Activated CD4-positive, alpha-beta T cell treated with anti-CD3 and anti-CD28 coated beads, Interleukin-2, amount 10 ng/mL, durations not matched to agents 24 days and 14 days (primary cell): ENCODE measurements at regions of chr12 and their contacts with region 1.

Region 1: GRCh38 chr12:108568338-108569154 is 6.2 kb downstream of the ISCU start:
- DNase-seq: peak; percentile 93
- H3K4me3 Mint-ChIP-seq: peak overlapping the region; percentile 78
- H3K27ac Mint-ChIP-seq: peak overlapping the region; percentile 91
- H3K4me1 Mint-ChIP-seq: peaks cover 47% of the 10 kb centered on the region
- H3K27me3 Mint-ChIP-seq: no peaks in the 10 kb centered on the region

Region 2: DNA sequence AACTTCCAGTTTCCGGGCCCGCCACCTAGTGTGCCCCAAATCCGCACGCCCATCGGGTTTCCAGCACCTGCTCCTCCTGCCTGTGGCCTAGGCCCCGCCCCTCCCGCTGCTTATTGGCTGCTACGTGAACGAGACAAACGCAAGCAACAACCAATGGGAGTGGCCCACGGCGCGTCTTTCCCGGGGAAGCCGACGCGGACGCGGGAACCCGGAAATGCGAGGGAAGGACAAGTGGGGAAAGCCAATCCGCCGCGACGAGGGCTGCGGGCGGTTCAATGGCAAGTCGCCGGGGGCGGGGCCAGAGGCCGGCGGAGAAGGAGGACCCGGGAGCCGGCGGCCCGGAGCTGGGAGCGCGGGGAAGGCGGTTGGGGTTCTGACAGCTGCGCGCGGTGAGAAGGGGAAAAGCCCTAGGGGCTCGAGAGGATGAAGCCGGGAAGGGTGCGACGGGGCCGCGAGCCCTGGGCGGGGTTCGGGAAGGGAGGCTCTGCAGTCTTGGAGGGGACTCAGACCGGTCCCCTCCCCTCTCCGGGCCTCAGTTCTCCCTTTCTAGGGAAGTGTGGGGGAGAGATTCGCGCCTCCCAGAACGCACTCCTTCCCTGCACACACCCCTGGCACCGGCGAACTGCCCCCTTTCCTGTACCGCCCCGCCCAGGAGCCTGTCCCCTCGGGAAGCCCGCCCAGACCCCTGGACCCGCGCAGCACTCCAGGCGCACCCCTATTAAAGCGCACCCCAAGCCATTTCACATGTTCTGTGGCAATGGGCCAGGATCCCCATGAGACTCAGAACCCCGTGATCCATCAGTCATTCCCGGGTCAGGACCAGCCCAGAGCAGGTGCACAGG is 53.4 kb before region 1 on chr12 and contains the start of gene FICD:
- intact Hi-C with region 1: no loop called
- DNase-seq: peak; percentile 100
- H3K4me3 Mint-ChIP-seq: peak within 1 kb of the TSS; percentile 94
- H3K27ac Mint-ChIP-seq: peak within 1 kb of the TSS; percentile 84
- H3K4me1 Mint-ChIP-seq: peaks cover 31% of the 10 kb centered on the region
- H3K27me3 Mint-ChIP-seq: no peaks in the 10 kb centered on the region
- total RNA-seq, gene FICD: 5.9 and 6.6 TPM in 2 replicates

Region 3: GRCh38 chr12:108618079-108618952 is 49.8 kb after region 1 on chr12:
- intact Hi-C with region 1: loop called (anchors 1 kb)
- DNase-seq: peak; percentile 93
- H3K4me3 Mint-ChIP-seq: no peak overlapping the region
- H3K27ac Mint-ChIP-seq: peak overlapping the region; percentile 83
- H3K4me1 Mint-ChIP-seq: peaks cover 50% of the 10 kb centered on the region
- H3K27me3 Mint-ChIP-seq: no peaks in the 10 kb centered on the region